OCI-LY7 (cell line): ENCODE measurements at regions of chr22 and their contacts with region 1.

Region 1: GRCh38 chr22:36506637-36507517 is at the start of gene FOXRED2:
- DNase-seq: peak; percentile 94
- H3K4me3 ChIP-seq: peak within 1 kb of the TSS; percentile 71
- H3K27ac ChIP-seq: peak within 1 kb of the TSS; percentile 73
- H3K4me1 ChIP-seq: peaks cover 29% of the 10 kb centered on the region
- CTCF ChIP-seq: no peak
- total RNA-seq, gene FOXRED2: 16.2 and 22.6 TPM in 2 replicates

Region 2: GRCh38 chr22:36387752-36388518 is 118.9 kb before region 1 on chr22 and contains the start of gene MYH9:
- CTCF ChIA-PET with region 1: no interaction called
- POLR2A ChIA-PET with region 1: no interaction called
- intact Hi-C with region 1: no loop called
- DNase-seq: peak; percentile 99
- H3K4me3 ChIP-seq: peak within 1 kb of the TSS; percentile 86
- H3K27ac ChIP-seq: peak within 1 kb of the TSS; percentile 93
- H3K4me1 ChIP-seq: peaks cover 45% of the 10 kb centered on the region
- CTCF ChIP-seq: no peak
- total RNA-seq, gene MYH9: 112 and 133 TPM in 2 replicates

Region 3: GRCh38 chr22:36520423-36520822 is 13.5 kb after region 1 on chr22:
- CTCF ChIA-PET with region 1: no interaction called
- POLR2A ChIA-PET with region 1: interaction called, 14 read pairs
- intact Hi-C with region 1: no loop called
- DNase-seq: no peak
- H3K4me3 ChIP-seq: no peak overlapping the region
- H3K27ac ChIP-seq: no peak overlapping the region
- H3K4me1 ChIP-seq: no peaks in the 10 kb centered on the region
- CTCF ChIP-seq: no peak